ENCODE measurements at regions of chr7 and their contacts with region 1.

Region 1: DNA sequence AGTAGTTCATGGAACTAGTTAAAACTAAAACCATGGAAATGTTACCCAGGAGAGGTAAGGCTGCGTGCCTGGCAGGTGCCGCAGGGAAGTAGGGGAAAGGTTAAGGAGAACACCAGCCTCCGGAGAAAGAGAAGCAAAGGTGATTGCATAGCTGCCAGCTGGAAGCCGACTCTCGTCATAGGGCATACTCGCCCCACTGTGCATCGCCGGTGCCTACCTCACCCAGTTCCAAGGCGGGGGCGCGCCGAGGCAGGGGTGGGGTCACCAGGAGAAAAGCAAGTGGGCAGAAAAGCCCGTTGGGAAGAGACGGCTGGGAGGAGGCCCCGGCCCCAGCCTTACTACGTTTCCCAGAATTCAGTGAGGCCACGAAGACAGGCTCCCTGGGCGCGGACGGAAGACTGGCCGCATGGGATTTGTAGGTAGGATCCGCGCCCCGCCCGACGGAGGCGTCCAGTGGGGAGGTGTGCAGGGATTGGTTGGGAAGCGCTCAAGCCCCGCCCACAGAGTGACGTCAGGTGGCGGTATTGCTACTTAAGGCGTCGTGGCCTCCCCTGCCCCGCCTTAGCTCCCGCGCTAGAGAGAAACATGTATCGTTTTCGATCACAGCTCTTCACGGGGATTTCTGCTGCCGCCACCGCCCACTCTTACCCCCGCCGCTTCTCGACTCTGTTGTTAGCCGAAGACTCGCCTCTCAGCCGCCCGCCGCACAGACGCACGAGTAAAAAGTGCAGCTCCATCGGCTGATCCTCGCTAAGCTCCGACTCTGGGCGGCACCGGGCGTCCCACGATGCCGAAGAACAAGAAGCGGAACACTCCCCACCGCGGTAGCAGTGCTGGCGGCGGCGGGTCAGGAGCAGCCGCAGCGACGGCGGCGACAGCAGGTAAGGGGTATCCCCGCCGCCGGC is at the start of gene IFRD1:
- DNase-seq: peak; percentile 94 to 99
- H3K4me3 ChIP-seq: peak within 1 kb of the TSS; percentile 100
- H3K27ac ChIP-seq: peak within 1 kb of the TSS; percentile 83
- H3K4me1 ChIP-seq: peaks cover 31% of the 10 kb centered on the region
- H3K27me3 ChIP-seq: no peaks in the 10 kb centered on the region
- CTCF ChIP-seq: no peak
- total RNA-seq, gene IFRD1: 79.6 and 89.4 TPM in 2 replicates

Region 2: GRCh38 chr7:111853201-111853990 is 596.8 kb before region 1 on chr7:
- CTCF ChIA-PET with region 1: no interaction called
- POLR2A ChIA-PET with region 1: no interaction called
- intact Hi-C with region 1: no loop called
- DNase-seq: no peak
- H3K4me3 ChIP-seq: no peak overlapping the region
- H3K27ac ChIP-seq: no peak overlapping the region
- H3K4me1 ChIP-seq: no peaks in the 10 kb centered on the region
- H3K27me3 ChIP-seq: no peaks in the 10 kb centered on the region
- CTCF ChIP-seq: no peak

Region 3: DNA sequence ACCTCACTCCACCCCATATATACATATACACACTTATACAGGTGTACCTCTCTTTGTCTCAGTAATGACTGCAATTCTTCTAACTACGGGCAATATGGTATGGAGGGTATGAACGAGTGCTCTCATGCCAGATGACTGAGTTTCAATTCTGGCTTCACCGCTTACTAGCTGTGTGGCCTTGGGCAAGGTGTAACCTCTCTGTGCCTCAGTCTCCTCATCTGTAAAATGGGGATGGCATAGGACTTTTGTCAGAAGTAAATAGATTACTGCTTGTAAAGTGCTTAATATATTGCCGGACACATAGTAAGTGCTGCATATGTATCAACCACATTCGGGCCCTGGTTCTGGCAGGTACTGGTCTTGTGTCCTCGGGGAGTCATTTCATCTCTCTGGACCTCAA is 60.0 kb before region 1 on chr7:
- CTCF ChIA-PET with region 1: no interaction called
- POLR2A ChIA-PET with region 1: interaction called, 4 read pairs
- intact Hi-C with region 1: loop called (anchors 2 kb)
- DNase-seq: no peak
- H3K4me3 ChIP-seq: no peak overlapping the region
- H3K27ac ChIP-seq: no peak overlapping the region
- H3K4me1 ChIP-seq: peaks cover 7% of the 10 kb centered on the region
- H3K27me3 ChIP-seq: no peaks in the 10 kb centered on the region
- CTCF ChIP-seq: no peak

Region 4: GRCh38 chr7:112422842-112423496 is 27.2 kb before region 1 on chr7:
- CTCF ChIA-PET with region 1: no interaction called
- POLR2A ChIA-PET with region 1: interaction called, 7 read pairs
- intact Hi-C with region 1: loop called (anchors 1 kb)
- DNase-seq: peak; percentile 97 to 100
- H3K4me3 ChIP-seq: peak overlapping the region; percentile 11; the same call in 1 of the 2 replicates
- H3K27ac ChIP-seq: peak overlapping the region; percentile 75
- H3K4me1 ChIP-seq: peaks cover 33% of the 10 kb centered on the region
- H3K27me3 ChIP-seq: no peaks in the 10 kb centered on the region
- CTCF ChIP-seq: no peak

Region 5: GRCh38 chr7:112462236-112462635 is 12.1 kb after region 1 on chr7:
- CTCF ChIA-PET with region 1: interaction called, 13 read pairs
- POLR2A ChIA-PET with region 1: interaction called, 4 read pairs
- intact Hi-C with region 1: no loop called
- DNase-seq: peak; percentile 40 to 65
- H3K4me3 ChIP-seq: no peak overlapping the region
- H3K27ac ChIP-seq: peak overlapping the region; percentile 52
- H3K4me1 ChIP-seq: 0 out of 2 replicates have a peak, but pooled peaks cover 8% of the 10 kb centered on the region
- H3K27me3 ChIP-seq: no peaks in the 10 kb centered on the region
- CTCF ChIP-seq: no peak

Region 6: DNA sequence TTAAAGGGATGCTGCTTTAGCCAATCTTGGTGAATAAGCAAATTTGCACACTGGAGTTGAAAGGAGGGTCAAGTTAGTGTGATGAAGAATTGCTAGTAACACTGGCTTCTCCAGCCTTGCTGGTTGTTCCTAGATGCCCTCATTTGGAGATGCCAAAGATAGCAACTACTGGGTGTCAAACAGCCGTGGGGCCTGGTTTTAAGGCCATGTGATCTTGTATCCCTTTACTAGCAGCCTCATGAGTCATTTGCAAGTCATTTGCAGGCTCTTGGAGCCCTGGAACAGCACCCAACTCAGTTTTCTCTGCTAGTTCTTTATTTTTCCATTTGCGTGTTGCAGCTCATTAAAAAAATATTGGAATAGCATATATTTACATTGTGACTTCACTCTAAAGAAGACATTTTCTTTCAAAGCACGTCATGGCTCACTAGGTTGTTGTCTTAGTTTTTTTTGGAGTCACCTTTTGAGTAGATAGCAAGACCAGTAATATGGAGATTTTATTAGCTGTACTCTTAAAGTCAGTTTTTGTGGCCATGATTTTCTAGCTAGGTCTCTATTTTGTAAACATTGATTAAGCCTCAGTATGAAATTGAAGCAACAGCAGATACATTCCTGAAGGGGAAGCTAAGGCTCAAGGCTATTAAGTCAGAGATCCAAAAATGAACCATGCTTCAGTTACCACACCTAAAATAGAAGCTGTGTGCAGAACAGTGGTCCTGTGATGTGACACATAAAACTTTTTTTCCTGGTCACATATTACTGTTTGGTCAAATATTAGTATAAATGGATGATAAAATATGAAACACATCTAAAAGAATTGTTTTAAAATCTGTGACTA is 31.9 kb after region 1 on chr7:
- CTCF ChIA-PET with region 1: interaction called, 4 read pairs
- POLR2A ChIA-PET with region 1: interaction called, 6 read pairs
- intact Hi-C with region 1: loop called (anchors 1 kb)
- DNase-seq: peak; percentile 83 to 93
- H3K4me3 ChIP-seq: no peak overlapping the region
- H3K27ac ChIP-seq: peak overlapping the region; percentile 48
- H3K4me1 ChIP-seq: peaks cover 35% of the 10 kb centered on the region
- H3K27me3 ChIP-seq: no peaks in the 10 kb centered on the region
- CTCF ChIP-seq: no peak